Naive thymus-derived CD4-positive, alpha-beta T cell (primary cell): ENCODE measurements at regions of chr17 and their contacts with region 1.

Region 1: DNA sequence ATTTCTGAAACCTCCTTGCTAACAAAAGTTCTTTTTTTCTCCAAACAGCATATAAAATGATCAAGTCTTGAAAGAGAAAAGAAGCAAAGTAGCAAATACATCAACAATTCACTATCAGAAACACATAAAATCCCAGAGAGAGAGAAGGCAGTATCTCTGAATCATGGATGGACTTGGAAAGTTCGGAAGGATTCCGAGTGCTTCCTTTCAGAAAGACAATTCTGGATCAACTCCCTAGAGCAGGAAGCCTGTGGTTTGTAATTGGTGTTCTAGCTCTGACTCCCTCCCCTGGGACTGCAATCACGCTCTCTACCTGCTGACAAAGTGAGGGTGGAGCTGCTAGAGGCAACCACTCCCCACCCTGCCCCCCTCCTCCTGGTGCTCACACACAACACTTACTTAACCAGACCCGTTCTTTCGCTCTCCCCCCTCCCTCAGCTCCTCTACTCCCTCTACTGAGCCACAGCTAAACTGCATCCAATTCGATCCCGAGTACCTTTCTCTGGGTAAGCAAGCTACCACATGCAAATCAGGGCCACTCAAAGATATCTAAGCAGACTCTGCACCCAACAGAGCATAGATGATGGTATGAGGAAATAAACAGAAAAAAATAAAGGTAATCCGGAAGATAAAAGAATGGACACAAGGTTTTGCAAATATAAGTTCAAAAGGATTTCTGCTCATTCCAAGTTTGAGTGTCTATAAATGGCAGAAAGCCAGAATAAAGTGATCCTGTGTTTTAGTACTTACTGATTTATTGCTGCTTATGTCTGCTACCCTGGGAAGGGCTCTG is at the start of gene RNF43:
- DNase-seq: peak; percentile 63 to 94 (median 90)
- ATAC-seq: peak; percentile 100
- H3K4me3 ChIP-seq: no peak within 1 kb of the TSS
- H3K4me3 Mint-ChIP-seq: peak within 1 kb of the TSS in 6 of 10 donors; percentile 0 to 69 (median 32)
- H3K27ac ChIP-seq: peak within 1 kb of the TSS; percentile 24
- H3K27ac Mint-ChIP-seq: peak within 1 kb of the TSS; percentile 1 to 94 (median 51)
- H3K4me1 ChIP-seq: peaks cover 0 to 9% of the 10 kb centered on the region in 2 donors
- H3K4me1 Mint-ChIP-seq: peaks cover 9 to 27% (median 14%) of the 10 kb centered on the region in 7 donors
- H3K27me3 ChIP-seq: no peaks in the 10 kb centered on the region
- H3K27me3 Mint-ChIP-seq: no peaks in the 10 kb centered on the region
- total RNA-seq, gene RNF43: 0.48 to 2.2 (median 1.9) TPM

Region 2: GRCh38 chr17:58249270-58250133 is 168.0 kb before region 1 on chr17:
- CTCF ChIA-PET with region 1: interaction called, 5 read pairs
- POLR2A ChIA-PET with region 1: no interaction called
- intact Hi-C with region 1: loop called in 1 of 2 experiments (anchors 1 kb)
- DNase-seq: peak; percentile 47 to 83 (median 74)
- ATAC-seq: peak; percentile 98
- H3K4me3 ChIP-seq: peak overlapping the region; percentile 65
- H3K4me3 Mint-ChIP-seq: peak overlapping the region; percentile 58 to 87 (median 81)
- H3K27ac ChIP-seq: no peak overlapping the region
- H3K27ac Mint-ChIP-seq: no peak overlapping the region
- H3K4me1 ChIP-seq: no peaks in the 10 kb centered on the region
- H3K4me1 Mint-ChIP-seq: peaks cover 0 to 21% (median 10%) of the 10 kb centered on the region in 7 donors
- H3K27me3 ChIP-seq: no peaks in the 10 kb centered on the region
- H3K27me3 Mint-ChIP-seq: peaks cover 3 to 50% (median 14%) of the 10 kb centered on the region in 5 donors

Region 3: DNA sequence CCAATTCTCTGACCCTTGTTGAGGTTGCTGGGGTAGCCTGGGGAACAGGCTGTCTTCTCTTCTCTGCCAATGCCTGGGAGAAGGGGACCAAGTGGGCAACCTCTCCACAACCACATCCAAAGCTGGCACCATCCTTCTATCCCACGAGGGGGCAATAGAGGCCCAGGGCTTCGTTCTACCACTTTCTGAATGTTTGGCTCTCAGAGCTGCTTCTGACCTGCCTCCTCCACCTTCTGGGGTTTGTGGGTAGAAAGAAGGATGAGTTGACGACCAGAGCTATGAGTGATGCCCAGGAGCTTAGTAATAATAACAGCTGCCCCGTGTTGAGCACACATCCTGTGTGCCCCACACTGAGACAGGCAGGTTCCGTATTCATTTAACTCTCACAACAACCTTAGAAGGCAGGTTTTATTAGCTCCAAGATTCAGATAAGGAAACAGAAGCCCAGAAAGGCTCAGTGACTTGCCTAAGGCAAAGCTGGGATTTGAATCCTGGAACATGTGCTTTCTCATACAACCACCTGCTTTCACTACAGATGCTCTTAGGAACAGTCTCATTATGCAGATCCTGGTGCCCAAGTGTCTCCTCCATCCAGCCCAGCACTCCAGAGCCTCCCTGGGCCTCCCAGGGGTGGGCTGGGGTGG is 100.0 kb before region 1 on chr17:
- CTCF ChIA-PET with region 1: interaction called, 64 read pairs
- POLR2A ChIA-PET with region 1: interaction called, 14 read pairs
- intact Hi-C with region 1: loop called (anchors 1 kb)
- DNase-seq: peak; percentile 44 to 83 (median 77)
- ATAC-seq: peak; percentile 95
- H3K4me3 ChIP-seq: no peak overlapping the region
- H3K4me3 Mint-ChIP-seq: peak overlapping the region in 4 of 10 donors; percentile 4 to 58 (median 28)
- H3K27ac ChIP-seq: peak overlapping the region; percentile 47
- H3K27ac Mint-ChIP-seq: peak overlapping the region; percentile 58 to 94 (median 84)
- H3K4me1 ChIP-seq: peaks cover 11 to 12% of the 10 kb centered on the region in 2 donors
- H3K4me1 Mint-ChIP-seq: peaks cover 10 to 26% (median 13%) of the 10 kb centered on the region in 7 donors
- H3K27me3 ChIP-seq: no peaks in the 10 kb centered on the region
- H3K27me3 Mint-ChIP-seq: no peaks in the 10 kb centered on the region

Region 4: GRCh38 chr17:58337600-58338453 is 79.7 kb before region 1 on chr17:
- CTCF ChIA-PET with region 1: interaction called, 8 read pairs
- POLR2A ChIA-PET with region 1: interaction called, 23 read pairs
- intact Hi-C with region 1: loop called in 1 of 2 experiments (anchors 5 kb)
- DNase-seq: peak; percentile 73 to 93 (median 85)
- ATAC-seq: peak; percentile 88
- H3K4me3 ChIP-seq: peak overlapping the region; percentile 98
- H3K4me3 Mint-ChIP-seq: peak overlapping the region; percentile 86 to 100 (median 97)
- H3K27ac ChIP-seq: peak overlapping the region; percentile 98
- H3K27ac Mint-ChIP-seq: peak overlapping the region; percentile 89 to 100 (median 95)
- H3K4me1 ChIP-seq: peaks cover 59 to 77% of the 10 kb centered on the region in 2 donors
- H3K4me1 Mint-ChIP-seq: peaks cover 52 to 90% (median 65%) of the 10 kb centered on the region in 7 donors
- H3K27me3 ChIP-seq: no peaks in the 10 kb centered on the region
- H3K27me3 Mint-ChIP-seq: no peaks in the 10 kb centered on the region

Region 5: GRCh38 chr17:58352014-58352842 is 65.3 kb before region 1 on chr17 and contains the start of gene SUPT4H1:
- CTCF ChIA-PET with region 1: interaction called, 8 read pairs
- POLR2A ChIA-PET with region 1: interaction called, 26 read pairs
- intact Hi-C with region 1: loop called (anchors 1 to 2 kb)
- DNase-seq: peak; percentile 83 to 93 (median 92)
- ATAC-seq: peak; percentile 98
- H3K4me3 ChIP-seq: peak within 1 kb of the TSS; percentile 95
- H3K4me3 Mint-ChIP-seq: peak within 1 kb of the TSS; percentile 97 to 100 (median 99)
- H3K27ac ChIP-seq: peak within 1 kb of the TSS; percentile 85
- H3K27ac Mint-ChIP-seq: peak within 1 kb of the TSS; percentile 93 to 99 (median 98)
- H3K4me1 ChIP-seq: peaks cover 16 to 31% of the 10 kb centered on the region in 2 donors
- H3K4me1 Mint-ChIP-seq: peaks cover 38 to 73% (median 66%) of the 10 kb centered on the region in 7 donors
- H3K27me3 ChIP-seq: no peaks in the 10 kb centered on the region
- H3K27me3 Mint-ChIP-seq: no peaks in the 10 kb centered on the region
- total RNA-seq, gene SUPT4H1: 36.0 to 75.6 (median 62.3) TPM

Region 6: GRCh38 chr17:58382108-58382871 is 35.2 kb before region 1 on chr17:
- CTCF ChIA-PET with region 1: interaction called, 3 read pairs
- POLR2A ChIA-PET with region 1: no interaction called
- intact Hi-C with region 1: loop called in 1 of 2 experiments (anchors 5 kb)
- DNase-seq: peak in 1 of 9 donors; percentile 19
- ATAC-seq: peak; percentile 59
- H3K4me3 ChIP-seq: no peak overlapping the region
- H3K4me3 Mint-ChIP-seq: peak overlapping the region; percentile 3 to 77 (median 38)
- H3K27ac ChIP-seq: peak overlapping the region; percentile 42
- H3K27ac Mint-ChIP-seq: peak overlapping the region; percentile 28 to 84 (median 78)
- H3K4me1 ChIP-seq: peaks cover 16 to 36% of the 10 kb centered on the region in 2 donors
- H3K4me1 Mint-ChIP-seq: peaks cover 34 to 66% (median 57%) of the 10 kb centered on the region in 7 donors
- H3K27me3 ChIP-seq: no peaks in the 10 kb centered on the region
- H3K27me3 Mint-ChIP-seq: no peaks in the 10 kb centered on the region